Head of caudate nucleus (tissue), 42 donors: ENCODE measurements at regions of chr10 and their contacts with region 1.

Region 1: GRCh38 chr10:4770801-4771553 is 55.0 kb upstream of the AKR1E2 start:
- DNase-seq: no peak

Region 2: DNA sequence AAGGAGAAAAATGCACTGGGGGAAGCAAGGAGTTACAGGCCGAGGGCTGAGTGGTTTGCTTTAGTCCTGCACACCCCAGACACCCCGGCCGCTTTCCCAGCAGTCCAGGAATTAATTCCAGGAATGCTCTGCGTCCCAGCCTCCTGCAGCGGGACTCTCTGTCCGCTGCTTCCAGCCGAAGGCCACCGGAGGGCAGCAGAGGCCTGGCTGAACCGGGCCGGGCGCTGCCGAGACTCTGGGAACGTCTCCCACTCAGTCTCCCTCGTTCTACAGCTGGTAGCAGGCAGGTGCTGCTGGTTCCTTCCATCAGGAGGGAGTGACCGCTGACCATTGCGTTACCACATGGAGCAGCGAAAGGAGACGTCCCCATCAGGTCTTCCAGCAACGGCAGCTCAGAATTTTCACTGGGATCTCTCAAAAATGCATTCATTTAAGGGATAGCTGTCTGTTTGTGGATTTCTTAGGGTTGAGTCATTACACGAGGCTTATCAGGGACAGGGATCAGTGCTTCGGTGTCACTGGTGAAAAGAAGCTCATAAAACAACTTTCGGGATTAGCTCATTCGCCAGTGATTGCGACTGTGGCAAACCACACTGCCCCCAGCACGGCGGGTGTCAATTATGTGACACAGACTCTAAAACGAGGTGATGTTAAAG is 1573.5 kb before region 1 on chr10:
- intact Hi-C with region 1: loop called (anchors 5 kb)
- DNase-seq: peak; percentile 55 to 90 (median 79)

Region 3: DNA sequence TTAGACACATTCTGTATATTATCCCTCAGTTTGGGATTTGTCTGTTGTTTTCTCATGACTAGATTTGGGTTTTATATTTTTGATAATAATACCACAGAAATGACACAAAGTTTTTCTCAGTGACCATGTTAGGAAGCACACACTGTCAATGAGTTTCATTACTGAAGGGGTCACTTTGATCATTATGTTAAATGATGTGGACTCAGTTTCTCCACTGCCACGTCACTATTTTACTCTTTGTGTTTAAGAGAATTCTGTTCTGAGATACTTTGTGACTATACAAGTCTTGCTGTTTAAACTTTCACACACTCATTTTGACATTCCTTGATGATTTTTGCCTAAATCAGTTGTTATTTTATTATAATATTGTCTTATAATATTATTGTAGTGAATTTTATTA is 345.9 kb before region 1 on chr10:
- intact Hi-C with region 1: no loop called
- DNase-seq: no peak

Region 4: DNA sequence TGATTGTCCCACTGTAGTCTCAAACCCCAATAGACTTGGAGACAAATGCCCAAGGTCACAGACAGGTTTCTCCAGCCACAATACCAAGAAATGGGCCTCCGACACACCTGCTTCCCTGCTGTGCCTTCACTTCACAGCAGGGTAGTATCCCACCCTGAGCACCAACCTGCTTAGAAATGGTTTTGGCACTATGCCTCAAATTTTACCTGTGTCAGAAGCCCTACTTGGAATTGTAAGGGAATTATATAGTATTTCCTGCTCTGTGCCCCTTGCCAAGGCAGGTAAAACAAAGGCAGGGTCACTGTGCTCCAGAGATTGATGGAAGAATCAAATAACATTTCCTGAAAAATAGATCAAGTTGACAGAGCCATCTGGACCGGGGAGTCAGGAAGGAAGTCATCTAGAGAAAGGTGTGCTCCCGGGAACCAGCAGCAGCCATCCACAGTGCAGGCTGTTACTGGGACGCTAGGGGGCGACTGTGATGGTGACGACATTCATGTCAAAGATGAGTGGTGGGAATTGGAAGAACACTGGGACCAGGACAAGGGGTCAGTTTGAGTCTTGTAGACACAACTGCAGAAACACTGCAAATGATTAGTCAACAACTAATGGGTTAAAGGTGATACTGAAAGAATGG is 62.7 kb before region 1 on chr10:
- intact Hi-C with region 1: no loop called
- DNase-seq: no peak

Region 5: GRCh38 chr10:4786043-4786839 is 15.3 kb after region 1 on chr10:
- intact Hi-C with region 1: no loop called
- DNase-seq: no peak